ENCODE measurements at regions of chr10 and their contacts with region 1.

Region 1: GRCh38 chr10:104614245-104614831 is 26.8 kb upstream of the SORCS3 start:
- DNase-seq: no peak
- H3K4me3 Mint-ChIP-seq: no peak overlapping the region
- H3K27ac Mint-ChIP-seq: no peak overlapping the region
- H3K4me1 Mint-ChIP-seq: no peaks in the 10 kb centered on the region
- H3K27me3 Mint-ChIP-seq: no peaks in the 10 kb centered on the region

Region 2: DNA sequence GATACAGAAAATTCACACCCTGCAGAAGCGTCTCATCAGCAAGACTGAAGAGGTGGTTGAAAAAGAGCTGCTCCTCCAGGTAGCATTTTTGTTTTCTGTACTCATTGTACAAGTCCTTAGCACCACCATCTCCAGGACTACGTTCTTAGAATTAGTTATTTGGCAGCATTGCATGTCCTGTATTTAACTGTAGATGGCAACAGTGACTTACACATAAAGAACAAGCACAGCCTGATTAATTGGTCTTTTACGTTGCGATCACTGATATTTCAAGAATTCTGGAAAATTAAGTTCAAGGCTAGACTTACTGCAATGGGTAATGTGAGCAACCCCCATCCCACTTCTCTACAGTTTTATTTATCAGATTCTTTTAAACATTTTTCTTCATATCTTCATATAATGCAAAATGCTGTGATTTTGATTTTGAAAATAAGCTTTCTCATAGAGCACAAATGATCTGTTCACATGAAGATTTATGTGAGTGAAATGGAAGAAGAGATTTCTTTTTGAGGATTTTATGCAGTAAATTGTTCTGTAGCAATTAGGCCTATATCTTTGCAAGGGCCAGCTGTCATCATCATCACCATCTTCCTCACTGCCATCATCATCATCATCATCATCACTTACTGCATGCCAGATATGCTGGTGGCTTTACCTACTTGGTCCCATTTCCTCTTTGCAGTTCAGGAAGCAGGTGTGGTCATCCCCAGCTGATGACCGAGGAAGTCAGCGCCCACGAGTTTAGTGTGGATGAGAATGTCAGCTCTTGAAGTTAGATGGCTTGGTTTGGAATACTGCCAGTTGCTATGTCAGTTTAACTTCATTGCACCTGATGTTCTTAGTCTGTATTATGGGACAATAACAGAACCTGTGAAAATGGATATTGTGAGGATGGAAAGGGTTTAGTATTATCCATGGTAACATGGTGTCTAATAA is 207.4 kb before region 1 on chr10:
- intact Hi-C with region 1: loop called (anchors 10 kb)
- DNase-seq: no peak
- H3K4me3 Mint-ChIP-seq: no peak overlapping the region
- H3K27ac Mint-ChIP-seq: no peak overlapping the region
- H3K4me1 Mint-ChIP-seq: no peaks in the 10 kb centered on the region
- H3K27me3 Mint-ChIP-seq: peaks cover 35% of the 10 kb centered on the region

Region 3: GRCh38 chr10:104424719-104425118 is 189.6 kb before region 1 on chr10:
- intact Hi-C with region 1: no loop called
- DNase-seq: no peak
- H3K4me3 Mint-ChIP-seq: no peak overlapping the region
- H3K27ac Mint-ChIP-seq: no peak overlapping the region
- H3K4me1 Mint-ChIP-seq: peaks cover 9% of the 10 kb centered on the region
- H3K27me3 Mint-ChIP-seq: peaks cover 4% of the 10 kb centered on the region

Region 4: DNA sequence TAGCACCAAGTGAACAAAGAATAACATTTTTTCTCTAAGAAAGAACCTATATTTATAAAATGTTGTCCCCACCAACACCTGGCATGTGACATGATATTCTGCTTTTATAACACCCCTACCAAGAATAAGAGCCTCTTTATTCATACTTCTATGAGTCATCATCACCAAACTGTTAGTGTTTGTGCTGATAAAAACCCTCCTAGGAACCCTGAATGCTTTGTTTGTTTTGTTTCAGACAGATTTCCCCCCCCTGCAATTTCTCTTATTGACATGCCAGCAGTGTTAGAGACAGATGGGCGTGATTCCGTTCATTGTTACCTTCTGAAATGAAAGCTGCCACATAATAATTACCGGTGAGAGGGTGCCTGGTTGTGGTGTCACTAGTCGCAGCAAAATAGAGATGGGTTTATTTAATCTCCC is 1899.0 kb after region 1 on chr10:
- intact Hi-C with region 1: no loop called
- DNase-seq: no peak
- H3K4me3 Mint-ChIP-seq: no peak overlapping the region
- H3K27ac Mint-ChIP-seq: no peak overlapping the region
- H3K4me1 Mint-ChIP-seq: no peaks in the 10 kb centered on the region
- H3K27me3 Mint-ChIP-seq: no peaks in the 10 kb centered on the region

Measured in activated T-helper 2 cell treated with anti-CD3 and anti-CD28 coated beads, Interferon-gamma antibody, Interleukin-2, Interleukin-4, amounts not matched to agents 10 μg/mL and 5 μg/mL and 100 μg/mL, durations not matched to agents 14 hours and 24 hours and 36 hours (primary cell).